Tibial artery (tissue), 4 donors: ENCODE measurements at regions of chr2 and their contacts with region 1.

Region 1: GRCh38 chr2:144143294-144144151 is 376.4 kb downstream of the ZEB2 start:
- DNase-seq: no peak
- H3K4me3 ChIP-seq: no peak overlapping the region
- H3K27ac ChIP-seq: peak overlapping the region; percentile 24 to 46
- H3K4me1 ChIP-seq: peaks cover 0 to 16% (median 0%) of the 10 kb centered on the region in 4 donors
- H3K27me3 ChIP-seq: no peaks in the 10 kb centered on the region
- CTCF ChIP-seq: no peak

Region 2: DNA sequence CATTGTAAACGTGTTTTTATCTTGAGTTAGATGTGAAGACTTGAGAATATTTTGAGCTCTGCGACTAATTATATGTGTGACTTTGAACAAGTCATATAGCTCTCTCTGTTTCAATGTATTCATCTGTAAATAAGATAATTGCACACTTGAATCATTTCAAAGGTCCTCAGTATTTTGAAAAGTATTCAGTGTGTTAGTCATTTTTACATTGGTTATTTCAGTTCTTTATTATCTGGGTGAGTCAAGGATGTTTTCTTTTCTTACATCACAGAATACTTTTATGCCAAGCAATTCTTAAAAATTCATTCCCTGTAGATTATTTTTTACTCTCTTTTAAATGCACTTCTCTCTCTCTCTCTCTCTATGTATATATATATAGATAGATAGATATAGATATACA is 1474.4 kb after region 1 on chr2:
- intact Hi-C with region 1: loop called (anchors 5 kb)
- DNase-seq: no peak
- H3K4me3 ChIP-seq: no peak overlapping the region
- H3K27ac ChIP-seq: no peak overlapping the region
- H3K4me1 ChIP-seq: peaks cover 0 to 1% (median 0%) of the 10 kb centered on the region in 4 donors
- H3K27me3 ChIP-seq: no peaks in the 10 kb centered on the region
- CTCF ChIP-seq: no peak